ENCODE measurements at regions of chr1 and their contacts with region 1.

Region 1: DNA sequence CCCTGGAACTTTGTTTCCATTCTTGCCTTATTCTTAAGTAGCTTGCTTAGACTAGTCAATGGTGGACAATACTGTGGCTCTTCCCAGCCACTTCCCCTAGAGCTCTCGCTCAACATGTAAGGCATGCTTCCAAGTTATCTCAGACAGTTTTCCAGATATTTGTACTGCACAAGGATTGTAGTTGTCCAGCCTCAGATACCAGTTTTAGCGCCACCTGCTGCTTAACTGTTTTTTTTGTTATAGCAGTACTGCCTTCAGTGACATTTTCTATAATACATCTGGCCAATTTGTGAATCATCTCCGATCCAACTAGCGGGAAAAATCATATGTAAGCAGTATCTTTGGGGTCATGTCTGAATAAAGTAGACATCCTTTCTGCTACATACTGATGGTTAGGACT is 346.7 kb upstream of the ADGRL4 start:
- DNase-seq: no peak
- H3K4me3 ChIP-seq: no peak overlapping the region
- H3K27ac ChIP-seq: no peak overlapping the region
- H3K4me1 ChIP-seq: no peaks in the 10 kb centered on the region
- H3K27me3 ChIP-seq: no peaks in the 10 kb centered on the region
- CTCF ChIP-seq: peak in 7 of 11 experiments; percentile 18 to 38 (median 25)
- POLR2A ChIP-seq: no peak

Region 2: GRCh38 chr1:78825561-78825960 is 527.7 kb before region 1 on chr1:
- intact Hi-C with region 1: loop called (anchors 10 kb)
- DNase-seq: no peak
- H3K4me3 ChIP-seq: no peak overlapping the region
- H3K27ac ChIP-seq: no peak overlapping the region
- H3K4me1 ChIP-seq: no peaks in the 10 kb centered on the region
- H3K27me3 ChIP-seq: no peaks in the 10 kb centered on the region
- CTCF ChIP-seq: no peak
- POLR2A ChIP-seq: no peak

Region 3: GRCh38 chr1:79113836-79114235 is 239.4 kb before region 1 on chr1:
- intact Hi-C with region 1: no loop called
- DNase-seq: no peak
- H3K4me3 ChIP-seq: no peak overlapping the region
- H3K27ac ChIP-seq: no peak overlapping the region
- H3K4me1 ChIP-seq: no peaks in the 10 kb centered on the region
- H3K27me3 ChIP-seq: no peaks in the 10 kb centered on the region
- CTCF ChIP-seq: no peak
- POLR2A ChIP-seq: no peak

Region 4: GRCh38 chr1:79259388-79260336 is 93.6 kb before region 1 on chr1:
- intact Hi-C with region 1: loop called (anchors 10 kb)
- DNase-seq: no peak
- H3K4me3 ChIP-seq: no peak overlapping the region
- H3K27ac ChIP-seq: no peak overlapping the region
- H3K4me1 ChIP-seq: no peaks in the 10 kb centered on the region
- H3K27me3 ChIP-seq: no peaks in the 10 kb centered on the region
- CTCF ChIP-seq: peak in 5 of 11 experiments; percentile 17 to 41 (median 25)
- POLR2A ChIP-seq: no peak

Region 5: DNA sequence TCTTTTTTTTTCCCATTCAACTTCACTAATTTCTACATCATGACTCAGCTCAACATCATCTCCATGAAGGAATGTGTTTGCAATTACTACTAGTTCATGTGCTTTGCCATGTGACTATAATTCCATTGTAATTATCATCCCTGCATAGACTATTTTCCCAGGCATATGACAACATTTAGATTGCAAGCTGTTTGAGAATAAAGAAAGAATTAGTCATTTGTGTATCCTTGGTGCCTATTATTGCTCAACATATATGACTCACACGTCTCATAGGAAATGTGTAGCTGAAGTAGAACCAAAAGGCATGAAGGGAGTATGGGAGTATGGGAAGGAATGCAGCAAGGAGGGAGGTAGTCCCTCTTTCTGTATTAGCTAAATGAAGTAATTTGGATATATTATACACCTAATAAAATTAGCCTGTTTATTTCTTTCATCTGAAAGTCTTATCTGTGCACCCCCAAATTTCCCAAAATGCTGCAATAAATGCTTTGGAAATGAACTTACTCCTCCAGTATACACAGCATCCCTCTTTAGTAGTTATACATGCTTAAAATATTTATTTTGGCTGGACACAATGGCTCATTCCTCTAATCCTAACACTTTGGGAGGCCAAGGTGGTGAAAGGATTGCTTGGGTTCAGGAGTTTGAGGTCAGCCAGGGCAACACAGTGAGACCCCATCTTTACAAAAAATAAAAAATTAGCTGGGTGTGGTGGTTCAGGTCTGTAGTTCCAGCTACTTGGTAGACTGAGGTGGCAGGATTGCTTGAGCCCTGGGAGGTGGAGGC is 29.8 kb before region 1 on chr1:
- intact Hi-C with region 1: no loop called
- DNase-seq: no peak
- H3K4me3 ChIP-seq: no peak overlapping the region
- H3K27ac ChIP-seq: no peak overlapping the region
- H3K4me1 ChIP-seq: no peaks in the 10 kb centered on the region
- H3K27me3 ChIP-seq: no peaks in the 10 kb centered on the region
- CTCF ChIP-seq: no peak
- POLR2A ChIP-seq: no peak

Measured in spleen (tissue), 13 donors.